ENCODE measurements at regions of chr10 and their contacts with region 1.

Region 1: GRCh38 chr10:124741281-124741921 is 2.8 kb downstream of the FAM53B start:
- DNase-seq: peak; percentile 84 to 91
- ATAC-seq: peak; percentile 64 to 72 (median 68)
- H3K4me3 ChIP-seq: peak overlapping the region; percentile 84
- H3K27ac ChIP-seq: peak overlapping the region; percentile 95
- H3K4me1 ChIP-seq: peaks cover 75% of the 10 kb centered on the region
- H3K27me3 ChIP-seq: no peaks in the 10 kb centered on the region
- CTCF ChIP-seq: peak; percentile 93

Region 2: GRCh38 chr10:124340033-124340760 is 401.2 kb before region 1 on chr10:
- intact Hi-C with region 1: no loop called
- DNase-seq: no peak
- ATAC-seq: no peak
- H3K4me3 ChIP-seq: no peak overlapping the region
- H3K27ac ChIP-seq: no peak overlapping the region
- H3K4me1 ChIP-seq: no peaks in the 10 kb centered on the region
- H3K27me3 ChIP-seq: no peaks in the 10 kb centered on the region
- CTCF ChIP-seq: no peak

Region 3: GRCh38 chr10:124530215-124530665 is 211.2 kb before region 1 on chr10:
- intact Hi-C with region 1: loop called (anchors 2 to 5 kb)
- DNase-seq: peak; percentile 88 to 93
- ATAC-seq: peak; percentile 85 to 90 (median 88)
- H3K4me3 ChIP-seq: no peak overlapping the region
- H3K27ac ChIP-seq: no peak overlapping the region
- H3K4me1 ChIP-seq: peaks cover 3% of the 10 kb centered on the region
- H3K27me3 ChIP-seq: no peaks in the 10 kb centered on the region
- CTCF ChIP-seq: peak; percentile 85

Region 4: DNA sequence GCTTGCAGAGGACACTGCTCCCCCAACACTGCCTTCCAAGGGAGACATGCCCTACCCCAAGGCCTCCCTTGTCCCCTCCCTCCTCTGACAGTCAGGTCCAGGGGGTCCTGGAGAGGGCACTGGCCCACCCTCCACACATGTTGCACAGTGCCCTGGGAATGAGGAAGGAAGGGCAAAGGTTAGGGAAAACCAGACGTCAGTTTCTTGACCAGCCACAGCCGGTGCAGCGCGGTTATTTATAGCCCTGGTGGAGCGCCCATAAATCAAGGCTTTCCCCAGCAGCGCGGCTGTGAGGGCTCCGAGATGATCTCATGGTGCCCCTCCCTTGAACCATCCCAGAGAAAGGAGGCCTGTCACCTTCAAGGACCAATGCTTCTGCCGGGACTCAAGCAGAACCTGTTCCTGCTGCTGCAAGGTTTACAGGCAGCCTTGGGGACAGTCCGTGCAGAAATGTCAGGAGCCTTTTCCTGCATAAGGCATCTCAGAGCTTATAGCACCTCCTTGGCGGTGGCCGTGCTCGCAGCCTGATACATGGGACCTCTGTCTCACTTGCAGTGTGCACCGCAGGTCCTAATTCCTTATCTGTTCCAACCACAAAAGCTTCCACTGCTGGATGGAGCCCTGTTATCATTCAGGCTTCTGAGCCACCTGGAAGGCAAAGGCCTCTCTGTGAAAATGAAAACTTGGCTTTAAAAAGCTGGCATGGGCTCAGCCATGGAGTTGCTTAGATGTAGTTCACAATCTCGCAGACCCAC is 152.5 kb before region 1 on chr10:
- intact Hi-C with region 1: no loop called
- DNase-seq: peak; percentile 73 to 90
- ATAC-seq: peak; percentile 97 to 99 (median 98)
- H3K4me3 ChIP-seq: no peak overlapping the region
- H3K27ac ChIP-seq: peak overlapping the region; percentile 74
- H3K4me1 ChIP-seq: peaks cover 19% of the 10 kb centered on the region
- H3K27me3 ChIP-seq: no peaks in the 10 kb centered on the region
- CTCF ChIP-seq: no peak

Region 5: DNA sequence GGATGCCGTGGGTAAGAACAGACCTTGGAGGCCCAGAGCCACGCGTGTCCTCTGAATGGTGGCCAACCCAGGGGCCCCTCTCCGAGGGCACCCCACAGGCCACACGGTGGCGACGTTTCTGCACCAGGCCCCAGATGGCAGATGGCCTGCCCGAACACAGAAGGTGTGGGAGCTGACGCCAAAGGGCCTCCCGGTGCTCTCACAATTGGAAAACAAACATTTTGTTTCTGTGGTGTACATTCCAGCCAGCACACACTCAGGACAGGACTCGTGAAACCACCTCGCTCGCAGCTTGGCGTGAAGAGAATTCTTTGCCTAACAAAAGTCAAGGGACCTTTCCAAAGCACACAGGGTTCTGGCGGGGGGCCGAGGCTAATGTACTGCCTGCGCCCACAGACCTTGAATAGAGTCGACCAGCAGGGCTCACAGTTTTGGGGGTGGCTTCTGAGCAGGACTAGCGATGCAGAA is 109.3 kb before region 1 on chr10:
- intact Hi-C with region 1: loop called (anchors 2 to 5 kb)
- DNase-seq: peak; percentile 58 to 76
- ATAC-seq: peak; percentile 72 to 81 (median 74)
- H3K4me3 ChIP-seq: peak overlapping the region; percentile 13
- H3K27ac ChIP-seq: peak overlapping the region; percentile 72
- H3K4me1 ChIP-seq: peaks cover 55% of the 10 kb centered on the region
- H3K27me3 ChIP-seq: no peaks in the 10 kb centered on the region
- CTCF ChIP-seq: peak; percentile 56

Region 6: GRCh38 chr10:124701435-124701834 is 40.0 kb before region 1 on chr10:
- intact Hi-C with region 1: loop called (anchors 2 to 5 kb)
- DNase-seq: peak; percentile 93 to 95
- ATAC-seq: peak; percentile 69 to 77 (median 74)
- H3K4me3 ChIP-seq: no peak overlapping the region
- H3K27ac ChIP-seq: peak overlapping the region; percentile 92
- H3K4me1 ChIP-seq: peaks cover 99% of the 10 kb centered on the region
- H3K27me3 ChIP-seq: no peaks in the 10 kb centered on the region
- CTCF ChIP-seq: no peak

Region 7: GRCh38 chr10:124763267-124763666 is 21.9 kb after region 1 on chr10:
- intact Hi-C with region 1: no loop called
- DNase-seq: no peak
- ATAC-seq: peak in 3 of 4 donors; percentile 65 to 88 (median 65)
- H3K4me3 ChIP-seq: no peak overlapping the region
- H3K27ac ChIP-seq: no peak overlapping the region
- H3K4me1 ChIP-seq: peaks cover 7% of the 10 kb centered on the region
- H3K27me3 ChIP-seq: no peaks in the 10 kb centered on the region
- CTCF ChIP-seq: no peak

Measured in psoas muscle (tissue), 8 donors.